ENCODE measurements at regions of chr11 and their contacts with region 1.

Region 1: GRCh38 chr11:130894322-130895025 is 21.8 kb downstream of the SNX19 start:
- DNase-seq: peak; percentile 57
- H3K4me3 ChIP-seq: no peak overlapping the region; a peak in 1 of 4 replicates
- H3K27ac ChIP-seq: no peak overlapping the region
- H3K4me1 ChIP-seq: no peaks in the 10 kb centered on the region; a peak in 1 of 4 replicates
- H3K27me3 ChIP-seq: no peaks in the 10 kb centered on the region
- CTCF ChIP-seq: peak; percentile 95
- EP300 ChIP-seq: no peak
- RAD21 ChIP-seq: peak; percentile 69

Region 2: GRCh38 chr11:130426837-130427341 is 467.6 kb before region 1 on chr11:
- CTCF ChIA-PET with region 1: interaction called, 68 read pairs
- POLR2A ChIA-PET with region 1: no interaction called
- DNase-seq: no peak
- H3K4me3 ChIP-seq: no peak overlapping the region
- H3K27ac ChIP-seq: no peak overlapping the region
- H3K4me1 ChIP-seq: no peaks in the 10 kb centered on the region; a peak in 1 of 4 replicates
- H3K27me3 ChIP-seq: peaks cover 73% of the 10 kb centered on the region
- CTCF ChIP-seq: no peak
- EP300 ChIP-seq: no peak
- RAD21 ChIP-seq: no peak

Region 3: DNA sequence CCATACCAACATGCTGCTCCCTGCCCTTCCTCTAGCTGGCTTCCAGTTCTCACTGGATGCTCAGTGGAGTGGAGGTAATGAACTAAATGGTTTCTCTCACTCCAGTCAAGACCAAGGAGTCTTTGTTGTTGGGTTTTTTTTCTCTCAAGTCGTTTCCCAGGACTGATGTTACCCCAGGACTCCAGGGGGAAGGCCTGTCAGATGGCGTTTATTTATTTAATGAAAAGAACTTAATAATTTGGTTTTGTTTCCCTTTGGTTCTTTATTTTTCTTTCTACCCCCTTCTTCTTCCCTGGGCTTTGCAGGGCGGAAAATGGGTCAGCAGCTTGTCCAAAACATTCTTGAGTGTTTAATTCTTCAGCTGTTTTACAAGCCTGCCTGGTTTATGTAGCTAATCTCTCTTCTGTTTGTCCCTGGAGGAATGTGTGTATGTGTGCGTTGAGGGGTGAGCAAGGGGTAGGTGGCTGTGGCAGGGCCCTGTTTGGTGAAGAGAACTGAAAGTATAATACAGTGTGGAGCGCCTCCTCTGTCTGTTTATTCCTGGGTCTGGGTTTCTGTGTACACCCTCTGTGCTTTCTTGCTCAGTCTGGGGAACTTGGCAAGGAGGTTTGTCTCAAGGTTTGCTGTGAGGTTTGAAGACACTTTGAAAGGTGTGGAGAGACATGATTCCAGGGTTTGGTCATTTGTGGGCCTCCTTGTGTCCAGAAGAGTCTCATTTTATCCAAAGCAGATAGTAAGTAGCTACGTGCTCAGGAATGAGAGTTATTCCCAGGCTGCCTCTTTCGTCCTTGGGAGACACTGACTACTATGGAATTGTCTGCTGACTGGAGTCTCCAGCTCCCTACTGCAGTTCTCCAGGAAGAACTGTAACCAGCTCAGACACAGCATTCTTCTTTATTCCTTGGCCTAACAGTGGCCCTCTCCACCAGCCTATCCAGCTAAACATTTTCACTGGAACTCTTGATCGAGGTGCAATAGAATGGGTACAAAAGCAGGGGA is 270.5 kb before region 1 on chr11:
- CTCF ChIA-PET with region 1: no interaction called
- POLR2A ChIA-PET with region 1: no interaction called
- DNase-seq: no peak
- H3K4me3 ChIP-seq: no peak overlapping the region
- H3K27ac ChIP-seq: no peak overlapping the region
- H3K4me1 ChIP-seq: no peaks in the 10 kb centered on the region
- H3K27me3 ChIP-seq: no peaks in the 10 kb centered on the region
- CTCF ChIP-seq: 0 out of 2 replicates have a peak, but pooled peaks have one; percentile 11
- EP300 ChIP-seq: no peak
- RAD21 ChIP-seq: no peak

Region 4: GRCh38 chr11:130737866-130738431 is 156.5 kb before region 1 on chr11:
- CTCF ChIA-PET with region 1: no interaction called
- POLR2A ChIA-PET with region 1: no interaction called
- DNase-seq: peak; percentile 47
- H3K4me3 ChIP-seq: peak overlapping the region; percentile 22 to 23; a peak in 1 of 4 replicates
- H3K27ac ChIP-seq: peak overlapping the region; percentile 64 to 66; a peak in 3 of 4 replicates
- H3K4me1 ChIP-seq: peaks cover 4 to 7% of the 10 kb centered on the region in 2 experiments; a peak in 3 of 4 replicates
- H3K27me3 ChIP-seq: no peaks in the 10 kb centered on the region
- CTCF ChIP-seq: no peak
- EP300 ChIP-seq: peak in 1 of 2 experiments; percentile 83; a peak in 1 of 4 replicates
- RAD21 ChIP-seq: no peak

Region 5: DNA sequence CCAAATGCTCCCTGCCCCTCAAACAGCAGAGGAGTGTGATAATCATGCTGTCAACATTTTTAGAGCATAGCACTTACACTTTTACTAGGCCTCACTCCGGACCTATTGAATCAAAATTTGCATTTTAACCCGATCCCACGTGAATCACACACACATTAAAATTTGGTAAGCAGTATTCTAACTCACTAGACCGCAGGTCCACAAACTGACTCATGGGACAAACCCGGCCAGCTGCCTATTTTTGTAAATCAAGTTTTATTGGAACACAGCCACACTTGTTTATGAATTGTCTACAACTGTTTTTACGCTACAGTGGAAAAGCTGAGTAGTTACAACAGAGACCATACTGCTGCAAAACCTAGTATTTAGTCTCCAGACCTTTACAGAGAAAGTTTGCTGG is 21.5 kb before region 1 on chr11:
- CTCF ChIA-PET with region 1: interaction called, 34 read pairs
- POLR2A ChIA-PET with region 1: no interaction called
- DNase-seq: no peak
- H3K4me3 ChIP-seq: no peak overlapping the region
- H3K27ac ChIP-seq: no peak overlapping the region
- H3K4me1 ChIP-seq: peaks cover 0 to 11% of the 10 kb centered on the region in 2 experiments; a peak in 1 of 4 replicates
- H3K27me3 ChIP-seq: no peaks in the 10 kb centered on the region
- CTCF ChIP-seq: no peak
- EP300 ChIP-seq: no peak
- RAD21 ChIP-seq: no peak

Region 6: DNA sequence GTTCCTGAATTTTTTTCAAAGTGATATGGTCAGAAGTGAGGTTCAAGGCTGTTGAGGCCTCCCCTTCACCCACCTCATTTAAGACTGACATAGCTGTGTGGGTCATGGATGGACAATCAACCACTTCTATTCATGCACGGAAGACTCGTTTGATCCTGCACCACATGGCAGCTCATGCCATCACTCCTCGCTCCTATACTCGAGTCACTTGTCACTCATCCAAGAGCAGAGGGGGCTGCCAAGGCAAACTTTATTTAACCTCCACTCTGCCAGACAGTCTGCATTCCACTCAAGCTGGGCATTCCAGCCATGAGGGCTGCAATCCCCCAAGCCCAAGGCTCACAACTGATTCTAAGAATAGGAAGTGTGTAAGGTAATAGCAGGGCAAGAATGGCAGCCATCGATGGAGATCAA is 12.3 kb before region 1 on chr11:
- CTCF ChIA-PET with region 1: interaction called, 34 read pairs
- POLR2A ChIA-PET with region 1: no interaction called
- DNase-seq: no peak
- H3K4me3 ChIP-seq: no peak overlapping the region
- H3K27ac ChIP-seq: no peak overlapping the region
- H3K4me1 ChIP-seq: no peaks in the 10 kb centered on the region
- H3K27me3 ChIP-seq: no peaks in the 10 kb centered on the region
- CTCF ChIP-seq: no peak
- EP300 ChIP-seq: no peak
- RAD21 ChIP-seq: no peak

Region 7: DNA sequence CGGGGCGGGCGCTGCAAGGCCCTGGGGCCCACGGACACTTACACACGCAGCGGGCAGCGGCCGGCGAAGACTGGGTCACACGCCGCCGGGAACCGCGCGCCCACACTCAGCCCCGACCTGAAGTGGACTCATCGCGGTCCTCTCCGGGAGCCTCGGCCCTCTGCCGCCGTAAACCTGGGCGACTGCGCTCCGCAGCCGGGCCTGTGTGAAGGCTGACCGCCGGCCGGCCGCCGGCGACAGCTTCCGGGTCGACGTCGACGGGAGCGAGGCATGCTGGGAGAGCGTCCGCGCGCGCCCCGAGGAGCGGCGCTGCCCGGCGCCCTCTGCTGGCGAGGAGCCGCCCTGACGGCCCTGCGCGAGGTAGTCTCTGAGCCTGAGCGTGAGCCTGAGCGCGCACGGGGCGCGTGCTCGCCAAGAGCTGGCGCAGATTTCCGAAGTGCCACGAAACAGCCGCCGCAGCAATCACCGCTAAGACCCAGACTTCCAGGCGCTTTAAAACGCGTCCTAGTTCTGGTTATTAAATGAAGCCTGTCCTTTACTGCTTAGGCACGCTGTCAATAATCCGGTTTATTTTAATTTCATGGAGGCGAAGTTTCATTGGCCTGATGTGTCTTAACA is 21.9 kb after region 1 on chr11 and contains the start of gene SNX19:
- CTCF ChIA-PET with region 1: interaction called, 25 read pairs
- POLR2A ChIA-PET with region 1: no interaction called
- DNase-seq: peak; percentile 97
- H3K4me3 ChIP-seq: peak within 1 kb of the TSS; percentile 90 to 96
- H3K27ac ChIP-seq: peak within 1 kb of the TSS; percentile 68 to 73; a peak in 3 of 4 replicates
- H3K4me1 ChIP-seq: peaks cover 9 to 18% of the 10 kb centered on the region in 2 experiments
- H3K27me3 ChIP-seq: no peaks in the 10 kb centered on the region
- CTCF ChIP-seq: peak; percentile 85
- EP300 ChIP-seq: peak in 1 of 2 experiments; percentile 29; a peak in 1 of 4 replicates
- RAD21 ChIP-seq: no peak
- polyA plus RNA-seq, gene SNX19: 16.6 and 21.9 TPM in 2 replicates

Measured in SK-N-SH (cell line).